WTC11 (cell line): ENCODE measurements at regions of chr19 and their contacts with region 1.

Region 1: GRCh38 chr19:48391107-48391986 is at the start of gene KDELR1:
- DNase-seq: peak; percentile 79
- ATAC-seq: peak; percentile 73
- H3K4me3 Mint-ChIP-seq: peak within 1 kb of the TSS; percentile 91
- H3K27ac Mint-ChIP-seq: peak within 1 kb of the TSS; percentile 60; the same call in 1 of the 2 replicates
- H3K4me1 Mint-ChIP-seq: peaks cover 31% of the 10 kb centered on the region
- H3K27me3 Mint-ChIP-seq: peaks cover 42% of the 10 kb centered on the region
- CTCF ChIP-seq: peak; percentile 79
- total RNA-seq, gene KDELR1: 207 to 226 TPM (median 223 TPM) in 3 replicates

Region 2: GRCh38 chr19:48090281-48090802 is 301.0 kb before region 1 on chr19:
- CTCF ChIA-PET with region 1: no interaction called
- POLR2A ChIA-PET with region 1: no interaction called
- DNase-seq: no peak
- ATAC-seq: no peak
- H3K4me3 Mint-ChIP-seq: no peak overlapping the region
- H3K27ac Mint-ChIP-seq: no peak overlapping the region
- H3K4me1 Mint-ChIP-seq: no peaks in the 10 kb centered on the region
- H3K27me3 Mint-ChIP-seq: peaks cover 9% of the 10 kb centered on the region
- CTCF ChIP-seq: no peak

Region 3: DNA sequence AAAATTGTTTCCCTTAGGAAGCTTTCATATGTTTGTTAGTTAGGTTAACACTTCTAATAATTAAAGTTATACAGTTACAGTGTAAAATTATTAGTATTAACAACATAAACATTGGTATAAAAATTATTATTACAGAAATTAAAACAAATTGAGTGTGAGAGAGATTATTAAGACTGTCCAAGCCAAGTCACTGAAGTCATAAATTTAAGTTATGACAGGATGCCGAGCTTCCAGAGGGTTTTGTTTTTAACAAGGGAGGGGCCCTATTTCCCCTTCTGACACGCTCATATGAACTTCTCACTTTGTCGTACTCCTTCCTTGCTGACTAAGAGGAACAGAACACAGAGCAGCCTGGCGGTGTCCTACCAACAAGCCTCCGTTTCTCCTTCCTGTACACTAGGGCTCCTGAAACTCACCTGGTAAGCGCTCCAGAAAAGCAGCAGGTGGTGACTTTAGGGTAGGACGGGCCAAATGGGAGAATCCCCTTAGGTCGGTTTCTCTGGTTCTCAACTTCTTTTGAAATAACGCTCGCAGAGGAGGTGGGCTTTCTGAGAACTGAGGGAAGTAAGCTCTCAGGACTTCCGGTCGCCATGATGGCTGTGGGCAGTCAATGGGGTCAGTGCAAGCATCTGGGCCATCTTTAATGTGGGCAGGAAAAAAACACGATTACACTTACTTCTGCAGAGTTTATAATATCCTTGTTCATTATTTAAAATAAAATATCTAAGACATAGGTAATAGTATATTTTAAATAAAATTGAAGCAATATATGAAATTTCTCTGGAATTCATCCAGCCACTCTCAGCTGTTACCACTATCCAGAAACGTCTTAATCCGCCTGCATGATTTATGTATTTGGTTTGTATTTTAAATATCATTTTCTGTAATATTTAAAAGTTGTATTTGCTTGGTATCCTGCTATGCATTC is 135.7 kb before region 1 on chr19 and contains the start of gene CARD8:
- CTCF ChIA-PET with region 1: no interaction called
- POLR2A ChIA-PET with region 1: no interaction called
- DNase-seq: peak; percentile 69
- ATAC-seq: peak; percentile 86
- H3K4me3 Mint-ChIP-seq: peak within 1 kb of the TSS; percentile 96
- H3K27ac Mint-ChIP-seq: peak within 1 kb of the TSS; percentile 98
- H3K4me1 Mint-ChIP-seq: peaks cover 11% of the 10 kb centered on the region
- H3K27me3 Mint-ChIP-seq: peaks cover 7% of the 10 kb centered on the region
- CTCF ChIP-seq: no peak
- total RNA-seq, gene CARD8: 23.0 to 31.1 TPM (median 29.8 TPM) in 3 replicates

Region 4: DNA sequence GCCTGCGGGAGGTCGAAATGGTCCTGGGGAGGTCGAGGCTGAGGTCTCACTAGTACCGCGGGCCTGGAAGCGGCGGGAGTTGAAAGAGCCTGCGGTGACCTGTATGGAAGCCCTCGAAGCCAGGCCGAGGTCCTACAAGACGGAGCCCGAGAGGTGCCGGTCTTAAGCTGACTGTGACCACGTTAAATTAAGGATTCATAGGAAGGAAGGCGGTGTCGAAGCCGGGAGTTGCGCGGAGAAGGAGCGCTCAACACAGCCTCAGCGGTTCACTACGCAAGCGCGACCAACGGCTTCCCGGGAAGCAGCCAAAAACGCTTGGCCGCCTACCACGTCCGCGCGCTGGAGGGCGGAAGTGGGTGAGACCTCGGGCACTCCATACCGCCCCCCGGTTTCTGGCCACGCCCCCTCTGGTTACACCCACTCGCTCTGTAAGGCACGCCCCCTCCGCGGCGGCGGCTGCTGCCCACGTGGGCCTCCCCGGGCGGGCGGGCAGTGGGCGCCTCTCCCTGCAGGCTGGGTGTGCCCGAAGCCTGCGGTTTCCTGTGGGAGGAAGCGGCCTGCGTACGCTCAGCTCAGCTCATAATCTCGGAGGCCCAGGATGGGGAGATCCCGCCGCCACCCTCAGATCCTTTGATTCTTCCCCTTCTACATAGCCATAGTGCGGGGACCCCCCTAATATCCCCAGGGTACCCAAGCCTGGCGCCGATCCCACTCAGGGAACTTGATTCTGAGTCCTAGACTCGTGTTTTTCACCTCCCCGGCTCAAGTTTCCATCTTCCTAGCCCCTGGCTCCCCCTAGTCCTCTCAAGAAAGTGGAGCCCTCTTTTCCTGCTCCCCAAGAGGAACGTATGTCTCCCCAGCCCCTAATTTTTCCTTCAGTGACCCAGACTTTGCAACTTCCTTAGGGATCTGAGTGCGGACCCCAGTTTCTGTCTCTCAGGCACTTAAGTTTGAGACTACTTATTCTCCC is 69.4 kb before region 1 on chr19:
- CTCF ChIA-PET with region 1: interaction called, 15 read pairs
- POLR2A ChIA-PET with region 1: interaction called, 3 read pairs
- DNase-seq: peak; percentile 97
- ATAC-seq: peak; percentile 56
- H3K4me3 Mint-ChIP-seq: peak overlapping the region; percentile 91
- H3K27ac Mint-ChIP-seq: peak overlapping the region; percentile 98
- H3K4me1 Mint-ChIP-seq: peaks cover 53% of the 10 kb centered on the region
- H3K27me3 Mint-ChIP-seq: peaks cover 43% of the 10 kb centered on the region
- CTCF ChIP-seq: no peak

Region 5: GRCh38 chr19:48363810-48364563 is 27.4 kb before region 1 on chr19 and contains the starts of genes SYNGR4 and TMEM143:
- CTCF ChIA-PET with region 1: interaction called, 80 read pairs
- POLR2A ChIA-PET with region 1: interaction called, 15 read pairs
- DNase-seq: peak; percentile 99
- ATAC-seq: peak; percentile 87
- H3K4me3 Mint-ChIP-seq: peak within 1 kb of the TSS; percentile 81
- H3K27ac Mint-ChIP-seq: peak within 1 kb of the TSS; percentile 97
- H3K4me1 Mint-ChIP-seq: peaks cover 9% of the 10 kb centered on the region
- H3K27me3 Mint-ChIP-seq: peaks cover 18% of the 10 kb centered on the region
- CTCF ChIP-seq: no peak
- total RNA-seq, gene SYNGR4: not detected in 3 replicates
- total RNA-seq, gene TMEM143: 20.2 to 29.6 TPM (median 27.0 TPM) in 3 replicates

Region 6: DNA sequence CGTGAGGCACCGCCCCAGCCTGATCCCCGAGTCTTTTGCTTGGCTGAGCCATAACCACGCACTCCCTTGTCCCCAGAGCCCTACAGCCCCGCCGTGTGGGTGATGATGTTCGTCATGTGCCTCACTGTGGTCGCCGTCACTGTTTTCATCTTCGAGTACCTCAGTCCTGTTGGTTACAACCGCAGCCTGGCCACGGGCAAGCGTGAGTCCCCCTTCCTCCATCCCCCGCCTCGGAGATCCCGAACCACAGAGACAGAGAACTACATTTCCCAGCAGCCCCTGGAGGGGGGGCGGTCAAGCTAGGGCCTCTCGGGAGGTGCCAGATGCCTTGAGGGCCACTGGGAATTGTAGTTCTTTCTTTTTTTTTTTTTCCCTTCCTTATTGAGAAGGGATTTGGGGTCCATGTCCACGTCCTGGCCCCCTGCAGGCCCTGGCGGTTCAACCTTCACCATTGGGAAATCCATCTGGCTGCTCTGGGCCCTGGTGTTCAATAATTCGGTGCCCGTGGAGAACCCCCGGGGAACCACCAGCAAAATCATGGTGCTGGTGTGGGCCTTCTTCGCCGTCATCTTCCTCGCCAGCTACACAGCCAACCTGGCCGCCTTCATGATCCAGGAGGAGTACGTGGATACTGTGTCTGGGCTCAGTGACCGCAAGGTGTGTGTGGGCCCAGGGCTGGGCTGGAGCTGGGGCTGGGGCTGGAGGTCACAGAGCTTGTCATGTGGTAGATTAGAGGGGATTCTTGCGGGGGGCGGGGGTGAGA is 28.0 kb after region 1 on chr19:
- CTCF ChIA-PET with region 1: interaction called, 70 read pairs
- POLR2A ChIA-PET with region 1: interaction called, 6 read pairs
- DNase-seq: peak; percentile 88
- ATAC-seq: peak; percentile 55
- H3K4me3 Mint-ChIP-seq: peak overlapping the region; percentile 36
- H3K27ac Mint-ChIP-seq: peak overlapping the region; percentile 87
- H3K4me1 Mint-ChIP-seq: peaks cover 21% of the 10 kb centered on the region
- H3K27me3 Mint-ChIP-seq: no peaks in the 10 kb centered on the region
- CTCF ChIP-seq: no peak

Region 7: DNA sequence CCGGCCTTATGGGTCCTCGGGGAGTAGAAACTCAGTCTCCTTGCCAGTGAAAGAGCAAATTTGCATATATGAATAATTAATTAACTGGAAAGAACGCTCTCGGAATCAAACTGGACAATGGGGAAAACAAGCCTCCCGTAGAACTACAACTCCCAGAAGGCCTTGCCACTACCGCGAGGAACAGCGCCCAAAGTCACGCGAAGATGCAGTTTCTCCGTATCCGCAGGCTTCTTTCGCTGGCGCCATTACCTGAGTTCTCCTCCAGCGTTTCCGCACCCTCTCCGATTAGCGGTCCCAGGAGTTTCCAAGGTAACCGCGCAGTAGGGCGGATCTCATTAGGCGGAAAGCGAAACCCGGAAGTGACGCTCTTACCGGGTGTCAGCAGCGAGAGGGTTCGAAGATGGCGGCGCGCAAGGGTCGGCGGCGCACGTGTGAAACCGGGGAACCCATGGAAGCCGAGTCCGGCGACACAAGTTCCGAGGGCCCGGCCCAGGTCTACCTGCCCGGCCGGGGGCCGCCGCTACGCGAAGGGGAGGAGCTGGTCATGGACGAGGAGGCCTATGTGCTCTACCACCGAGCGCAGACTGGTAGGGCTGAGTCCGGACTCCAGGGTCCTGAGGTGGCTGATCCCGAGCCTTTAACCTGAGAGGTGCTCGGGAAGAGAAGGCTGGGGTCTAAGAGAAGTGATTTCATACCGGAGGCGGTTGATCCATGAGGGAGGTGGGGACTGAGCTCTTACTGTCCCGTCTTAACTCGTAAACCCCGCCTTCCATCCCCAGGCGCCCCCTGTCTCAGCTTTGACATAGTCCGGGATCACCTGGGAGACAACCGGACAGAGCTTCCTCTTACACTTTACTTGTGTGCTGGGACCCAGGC is 54.5 kb after region 1 on chr19 and contains the start of gene GRWD1:
- CTCF ChIA-PET with region 1: interaction called, 41 read pairs
- POLR2A ChIA-PET with region 1: interaction called, 4 read pairs
- DNase-seq: peak; percentile 91
- ATAC-seq: peak; percentile 79
- H3K4me3 Mint-ChIP-seq: peak within 1 kb of the TSS; percentile 93
- H3K27ac Mint-ChIP-seq: peak within 1 kb of the TSS; percentile 99
- H3K4me1 Mint-ChIP-seq: peaks cover 18% of the 10 kb centered on the region
- H3K27me3 Mint-ChIP-seq: peaks cover 19% of the 10 kb centered on the region
- CTCF ChIP-seq: no peak
- total RNA-seq, gene GRWD1: 59.8 to 67.2 TPM (median 61.6 TPM) in 3 replicates

Region 8: DNA sequence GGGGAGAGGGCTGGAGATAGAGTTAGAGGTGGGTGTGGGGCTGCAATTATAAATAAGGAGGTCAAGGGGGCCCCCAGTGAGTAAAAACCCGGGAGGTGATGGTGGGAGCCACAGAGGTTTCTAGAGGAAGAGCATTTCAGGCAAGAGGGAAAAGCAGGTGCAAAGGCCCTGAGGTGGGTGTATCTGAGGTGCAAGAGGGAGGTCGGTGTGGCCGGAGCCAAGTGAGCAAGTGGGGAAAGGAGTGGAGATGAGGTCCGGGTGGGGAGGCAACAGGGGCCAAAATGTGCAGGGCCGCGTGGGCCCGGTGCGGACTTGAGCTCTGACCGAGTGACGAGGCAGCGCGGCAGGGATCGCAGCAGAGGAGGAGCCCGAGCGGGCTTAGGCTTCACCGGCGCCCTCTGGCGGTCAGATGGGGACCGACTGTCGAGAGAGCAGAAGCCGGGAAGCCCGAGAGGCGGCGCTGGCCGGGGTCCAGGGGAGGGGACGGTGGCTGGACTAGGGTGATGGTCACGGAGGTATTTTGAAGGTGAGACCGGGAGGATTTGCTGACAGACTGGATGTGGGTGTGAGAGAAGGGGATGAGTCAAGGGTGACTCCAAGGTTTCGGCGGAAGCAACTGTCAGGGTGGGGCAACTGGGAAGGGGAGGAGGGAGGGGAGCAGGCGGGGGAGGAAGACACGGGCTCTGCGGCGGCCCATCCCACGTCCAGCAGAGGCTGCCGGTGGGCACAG is 197.5 kb after region 1 on chr19:
- CTCF ChIA-PET with region 1: interaction called, 14 read pairs
- POLR2A ChIA-PET with region 1: no interaction called
- DNase-seq: peak; percentile 96
- ATAC-seq: peak; percentile 80
- H3K4me3 Mint-ChIP-seq: peak overlapping the region; percentile 72
- H3K27ac Mint-ChIP-seq: no peak overlapping the region
- H3K4me1 Mint-ChIP-seq: peaks cover 12% of the 10 kb centered on the region
- H3K27me3 Mint-ChIP-seq: peaks cover 30% of the 10 kb centered on the region
- CTCF ChIP-seq: peak; percentile 92